ENCODE measurements at regions of chr4 and their contacts with region 1.

Region 1: GRCh38 chr4:39353478-39354253 is 12.5 kb downstream of the RFC1 start:
- DNase-seq: no peak
- H3K4me3 Mint-ChIP-seq: peak overlapping the region; percentile 72
- H3K27ac Mint-ChIP-seq: peak overlapping the region; percentile 93
- H3K4me1 Mint-ChIP-seq: peaks cover 52% of the 10 kb centered on the region
- H3K27me3 Mint-ChIP-seq: no peaks in the 10 kb centered on the region

Region 2: GRCh38 chr4:38958453-38959190 is 395.0 kb before region 1 on chr4:
- intact Hi-C with region 1: loop called (anchors 5 kb)
- DNase-seq: no peak
- H3K4me3 Mint-ChIP-seq: no peak overlapping the region
- H3K27ac Mint-ChIP-seq: peak overlapping the region; percentile 94
- H3K4me1 Mint-ChIP-seq: peaks cover 35% of the 10 kb centered on the region
- H3K27me3 Mint-ChIP-seq: no peaks in the 10 kb centered on the region

Region 3: GRCh38 chr4:39365830-39366771 is 12.4 kb after region 1 on chr4 and contains the start of gene RFC1:
- intact Hi-C with region 1: loop called (anchors 1 kb)
- DNase-seq: peak; percentile 89
- H3K4me3 Mint-ChIP-seq: peak within 1 kb of the TSS; percentile 90
- H3K27ac Mint-ChIP-seq: peak within 1 kb of the TSS; percentile 86
- H3K4me1 Mint-ChIP-seq: peaks cover 31% of the 10 kb centered on the region
- H3K27me3 Mint-ChIP-seq: peaks cover 1% of the 10 kb centered on the region
- total RNA-seq, gene RFC1: 56.6 and 64.7 TPM in 2 replicates

Region 4: GRCh38 chr4:39697740-39698423 is 344.2 kb after region 1 on chr4 and contains the start of gene UBE2K:
- intact Hi-C with region 1: loop called (anchors 5 kb)
- DNase-seq: peak; percentile 87
- H3K4me3 Mint-ChIP-seq: peak within 1 kb of the TSS; percentile 99
- H3K27ac Mint-ChIP-seq: peak within 1 kb of the TSS; percentile 98
- H3K4me1 Mint-ChIP-seq: peaks cover 25% of the 10 kb centered on the region
- H3K27me3 Mint-ChIP-seq: no peaks in the 10 kb centered on the region
- total RNA-seq, gene UBE2K: 94.1 and 94.8 TPM in 2 replicates